Activated naive CD4-positive, alpha-beta T cell treated with anti-CD3 and anti-CD28 coated beads for 36 hours (primary cell): ENCODE measurements at regions of chr5 and their contacts with region 1.

Region 1: DNA sequence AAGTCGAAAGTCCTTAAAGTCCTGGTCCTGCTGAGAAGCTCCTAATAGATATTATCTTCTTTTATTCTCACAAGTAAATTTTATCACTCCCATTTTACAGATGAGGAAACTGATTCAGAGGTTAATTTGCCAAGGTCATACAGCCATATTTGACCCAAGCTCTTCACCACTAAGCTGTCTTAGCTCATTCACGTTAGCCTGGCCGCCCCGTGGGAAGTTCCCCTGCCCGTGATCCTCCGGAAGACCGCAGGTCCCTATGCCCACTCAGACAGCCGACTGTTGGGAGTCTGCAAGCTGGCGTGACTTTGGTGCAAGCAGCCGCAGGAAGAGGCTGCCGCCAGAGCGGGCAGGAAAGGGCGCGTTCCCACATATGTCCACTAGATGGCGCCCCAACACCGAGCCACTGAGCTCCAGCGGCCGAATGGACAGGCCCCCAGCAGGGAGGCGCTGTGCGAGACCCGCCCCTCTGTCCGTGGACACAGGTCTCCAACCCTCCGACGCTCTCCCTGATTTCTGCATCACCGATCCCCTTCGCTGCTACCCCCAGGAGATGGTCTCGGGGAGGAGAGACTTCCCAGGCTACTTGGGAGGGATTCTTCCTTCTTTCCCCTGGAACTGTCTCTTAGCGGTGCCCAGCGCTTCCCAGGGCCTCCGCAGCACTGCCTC is 10.0 kb upstream of the ARAP3 start:
- DNase-seq: peak; percentile 90
- H3K4me3 Mint-ChIP-seq: peak overlapping the region; percentile 53
- H3K27ac Mint-ChIP-seq: no peak overlapping the region
- H3K4me1 Mint-ChIP-seq: peaks cover 20% of the 10 kb centered on the region
- H3K27me3 Mint-ChIP-seq: peaks cover 7% of the 10 kb centered on the region

Region 2: DNA sequence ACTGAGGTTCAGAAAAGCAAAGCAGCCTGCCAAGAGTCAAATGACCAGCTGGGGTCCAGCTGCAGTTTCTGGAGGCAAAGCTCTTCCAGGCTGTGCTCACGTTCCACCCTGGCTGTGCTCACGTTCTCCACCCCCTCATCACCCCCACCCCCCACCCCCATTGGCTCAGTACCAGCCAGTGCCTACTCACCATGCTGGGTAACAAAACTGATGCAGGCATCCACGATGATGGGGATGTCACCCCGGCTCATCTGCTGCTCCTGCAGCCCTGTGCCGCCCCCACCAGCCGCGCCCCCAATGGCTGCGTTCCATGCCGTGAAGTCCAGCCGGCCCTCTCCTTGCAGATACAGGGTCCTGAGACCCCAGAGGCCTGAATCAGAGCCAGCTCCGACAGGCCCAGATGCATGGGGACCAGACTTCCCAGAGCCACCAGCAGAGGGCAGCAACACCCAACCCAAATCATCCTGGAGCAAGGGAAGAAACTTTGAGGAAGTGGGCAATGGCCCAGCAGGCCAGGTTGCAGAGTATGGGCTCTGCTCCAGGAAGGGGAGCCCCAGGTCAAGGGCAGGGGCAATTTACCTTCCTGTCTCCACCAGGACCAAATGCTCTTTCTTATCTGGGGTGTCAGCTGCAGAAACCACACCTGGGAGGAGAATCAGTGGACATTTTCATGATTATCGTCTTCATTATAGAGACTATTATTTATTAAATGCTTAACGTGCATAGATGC is 27.1 kb before region 1 on chr5:
- CTCF ChIA-PET with region 1: interaction called, 18 read pairs
- intact Hi-C with region 1: loop called (anchors 1 kb)
- DNase-seq: peak; percentile 84
- H3K4me3 Mint-ChIP-seq: no peak overlapping the region
- H3K27ac Mint-ChIP-seq: no peak overlapping the region
- H3K4me1 Mint-ChIP-seq: peaks cover 2% of the 10 kb centered on the region
- H3K27me3 Mint-ChIP-seq: no peaks in the 10 kb centered on the region

Region 3: GRCh38 chr5:141811287-141812155 is 119.5 kb after region 1 on chr5:
- CTCF ChIA-PET with region 1: interaction called, 28 read pairs
- intact Hi-C with region 1: loop called (anchors 2 kb)
- DNase-seq: peak; percentile 25
- H3K4me3 Mint-ChIP-seq: no peak overlapping the region
- H3K27ac Mint-ChIP-seq: no peak overlapping the region
- H3K4me1 Mint-ChIP-seq: no peaks in the 10 kb centered on the region
- H3K27me3 Mint-ChIP-seq: peaks cover 44% of the 10 kb centered on the region

Region 4: GRCh38 chr5:141849375-141850243 is 157.6 kb after region 1 on chr5:
- CTCF ChIA-PET with region 1: no interaction called
- intact Hi-C with region 1: loop called (anchors 1 kb)
- DNase-seq: peak; percentile 84
- H3K4me3 Mint-ChIP-seq: peak overlapping the region; percentile 86
- H3K27ac Mint-ChIP-seq: peak overlapping the region; percentile 75
- H3K4me1 Mint-ChIP-seq: peaks cover 16% of the 10 kb centered on the region
- H3K27me3 Mint-ChIP-seq: no peaks in the 10 kb centered on the region

Region 5: GRCh38 chr5:142145106-142145900 is 453.3 kb after region 1 on chr5:
- CTCF ChIA-PET with region 1: interaction called, 3 read pairs
- intact Hi-C with region 1: loop called (anchors 2 kb)
- DNase-seq: peak; percentile 82
- H3K4me3 Mint-ChIP-seq: no peak overlapping the region
- H3K27ac Mint-ChIP-seq: no peak overlapping the region
- H3K4me1 Mint-ChIP-seq: peaks cover 11% of the 10 kb centered on the region
- H3K27me3 Mint-ChIP-seq: no peaks in the 10 kb centered on the region